ENCODE measurements at regions of chr2 and their contacts with region 1.

Region 1: GRCh38 chr2:26330113-26330549 is 15.8 kb upstream of the SELENOI start:
- DNase-seq: peak; percentile 71 to 81 (median 73)
- H3K4me3 ChIP-seq: no peak overlapping the region
- H3K4me3 Mint-ChIP-seq: peak overlapping the region in 1 of 8 donors; percentile 60
- H3K27ac ChIP-seq: no peak overlapping the region
- H3K27ac Mint-ChIP-seq: peak overlapping the region in 2 of 7 donors; percentile 24 to 31
- H3K4me1 ChIP-seq: peaks cover 8% of the 10 kb centered on the region
- H3K4me1 Mint-ChIP-seq: peaks cover 6 to 10% (median 8%) of the 10 kb centered on the region in 4 donors
- H3K27me3 ChIP-seq: no peaks in the 10 kb centered on the region
- H3K27me3 Mint-ChIP-seq: no peaks in the 10 kb centered on the region

Region 2: GRCh38 chr2:26235085-26235484 is 95.0 kb before region 1 on chr2:
- CTCF ChIA-PET with region 1: no interaction called
- POLR2A ChIA-PET with region 1: no interaction called
- intact Hi-C with region 1: loop called (anchors 2 kb)
- DNase-seq: peak in 2 of 5 donors; percentile 2 to 4
- H3K4me3 ChIP-seq: no peak overlapping the region
- H3K4me3 Mint-ChIP-seq: no peak overlapping the region
- H3K27ac ChIP-seq: no peak overlapping the region
- H3K27ac Mint-ChIP-seq: no peak overlapping the region
- H3K4me1 ChIP-seq: peaks cover 5% of the 10 kb centered on the region
- H3K4me1 Mint-ChIP-seq: peaks cover 6 to 9% (median 7%) of the 10 kb centered on the region in 4 donors
- H3K27me3 ChIP-seq: no peaks in the 10 kb centered on the region
- H3K27me3 Mint-ChIP-seq: no peaks in the 10 kb centered on the region

Region 3: GRCh38 chr2:26299471-26300101 is 30.5 kb before region 1 on chr2:
- CTCF ChIA-PET with region 1: interaction called, 8 read pairs
- POLR2A ChIA-PET with region 1: no interaction called
- intact Hi-C with region 1: loop called (anchors 1 kb)
- DNase-seq: peak in 4 of 5 donors; percentile 37 to 50 (median 44)
- H3K4me3 ChIP-seq: peak overlapping the region; percentile 53 to 74
- H3K4me3 Mint-ChIP-seq: no peak overlapping the region
- H3K27ac ChIP-seq: peak overlapping the region; percentile 47
- H3K27ac Mint-ChIP-seq: no peak overlapping the region
- H3K4me1 ChIP-seq: peaks cover 14% of the 10 kb centered on the region
- H3K4me1 Mint-ChIP-seq: no peaks in the 10 kb centered on the region
- H3K27me3 ChIP-seq: no peaks in the 10 kb centered on the region
- H3K27me3 Mint-ChIP-seq: no peaks in the 10 kb centered on the region

Region 4: DNA sequence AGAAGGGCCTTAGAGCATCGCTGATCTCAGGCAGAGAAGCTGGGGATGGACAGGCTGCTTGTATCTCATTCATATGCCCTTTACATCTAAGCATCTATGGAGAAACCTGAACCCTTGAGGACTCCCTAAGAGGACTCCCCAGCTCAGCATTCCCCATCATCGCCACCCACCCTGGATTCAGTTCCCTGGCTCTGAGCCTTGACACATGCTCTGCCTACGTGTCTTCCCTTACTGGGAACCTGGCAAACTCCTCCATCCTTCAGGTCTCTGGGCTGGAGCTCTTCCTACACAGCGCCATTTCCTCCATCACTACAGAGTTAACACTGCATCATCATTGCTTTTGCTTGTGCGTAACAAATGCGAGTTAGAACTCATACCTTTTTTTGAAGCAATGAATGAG is 179.0 kb after region 1 on chr2:
- CTCF ChIA-PET with region 1: no interaction called
- POLR2A ChIA-PET with region 1: no interaction called
- intact Hi-C with region 1: no loop called
- DNase-seq: no peak
- H3K4me3 ChIP-seq: no peak overlapping the region
- H3K4me3 Mint-ChIP-seq: no peak overlapping the region
- H3K27ac ChIP-seq: no peak overlapping the region
- H3K27ac Mint-ChIP-seq: no peak overlapping the region
- H3K4me1 ChIP-seq: no peaks in the 10 kb centered on the region
- H3K4me1 Mint-ChIP-seq: peaks cover 0 to under 1% (median 0%) of the 10 kb centered on the region in 4 donors
- H3K27me3 ChIP-seq: no peaks in the 10 kb centered on the region
- H3K27me3 Mint-ChIP-seq: peaks cover 0 to under 1% of the 10 kb centered on the region in 2 donors